Right ventricle myocardium superior (tissue), 1 donor: ENCODE measurements at regions of chr6 and their contacts with region 1.

Region 1: GRCh38 chr6:116094041-116094440 is 6.6 kb upstream of the NT5DC1 start:
- DNase-seq: no peak
- ATAC-seq: no peak

Region 2: GRCh38 chr6:115999235-115999634 is 94.8 kb before region 1 on chr6:
- intact Hi-C with region 1: no loop called
- DNase-seq: no peak
- ATAC-seq: no peak

Region 3: DNA sequence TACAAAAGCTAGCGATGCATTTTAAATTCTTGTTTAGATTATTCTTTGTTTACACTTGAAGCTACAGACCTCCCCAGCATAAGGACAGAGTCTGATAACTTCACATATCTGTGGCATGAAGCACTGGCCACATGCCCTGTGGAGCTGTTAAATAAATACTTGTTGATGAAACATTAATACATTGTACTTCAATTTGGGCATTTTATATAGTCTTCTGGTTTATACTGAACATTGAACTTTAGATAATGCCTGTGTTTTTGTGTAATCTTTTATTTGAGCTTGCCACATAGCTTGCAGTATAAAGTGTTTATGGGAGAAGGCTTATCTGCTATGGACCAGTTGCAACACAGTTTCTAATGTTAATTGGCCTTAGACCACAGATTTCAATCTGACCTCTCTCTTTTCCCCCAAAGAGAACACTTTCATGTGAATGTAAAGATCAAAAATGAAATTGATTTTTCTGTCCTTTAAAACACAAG is 81.5 kb before region 1 on chr6:
- intact Hi-C with region 1: loop called (anchors 2 kb)
- DNase-seq: no peak
- ATAC-seq: no peak